ENCODE measurements at regions of chr5 and their contacts with region 1.

Region 1: DNA sequence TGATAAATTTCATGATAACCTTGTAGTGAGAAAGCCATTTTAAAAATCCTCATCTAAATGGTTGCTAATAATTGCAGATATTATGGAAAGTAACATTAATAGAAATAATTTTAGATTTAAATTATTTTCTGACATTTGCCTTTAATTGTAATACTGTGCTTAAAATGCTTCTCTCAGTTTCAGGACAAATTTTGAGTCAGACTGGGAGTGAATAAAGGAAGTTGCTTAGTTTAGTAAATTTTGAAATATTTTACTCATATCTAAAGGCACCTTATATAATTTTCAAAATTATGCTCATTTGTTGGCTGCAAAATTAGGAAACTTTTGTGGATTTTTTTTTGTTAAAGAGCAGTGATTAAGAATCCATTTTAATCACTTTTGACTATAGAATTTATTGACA is 93.8 kb downstream of the CSNK1G3 start:
- DNase-seq: no peak
- ATAC-seq: no peak
- H3K4me3 ChIP-seq: no peak overlapping the region
- H3K27ac ChIP-seq: no peak overlapping the region
- H3K4me1 ChIP-seq: peaks cover 0 to 12% (median 0%) of the 10 kb centered on the region in 9 donors
- H3K27me3 ChIP-seq: no peaks in the 10 kb centered on the region
- CTCF ChIP-seq: no peak

Region 2: GRCh38 chr5:123414975-123415374 is 190.8 kb before region 1 on chr5:
- intact Hi-C with region 1: loop called in 5 of 10 experiments (anchors 5 to 10 kb)
- DNase-seq: no peak
- ATAC-seq: no peak
- H3K4me3 ChIP-seq: no peak overlapping the region
- H3K27ac ChIP-seq: no peak overlapping the region
- H3K4me1 ChIP-seq: peaks cover 0 to 17% (median 0%) of the 10 kb centered on the region in 9 donors
- H3K27me3 ChIP-seq: no peaks in the 10 kb centered on the region
- CTCF ChIP-seq: no peak

Region 3: DNA sequence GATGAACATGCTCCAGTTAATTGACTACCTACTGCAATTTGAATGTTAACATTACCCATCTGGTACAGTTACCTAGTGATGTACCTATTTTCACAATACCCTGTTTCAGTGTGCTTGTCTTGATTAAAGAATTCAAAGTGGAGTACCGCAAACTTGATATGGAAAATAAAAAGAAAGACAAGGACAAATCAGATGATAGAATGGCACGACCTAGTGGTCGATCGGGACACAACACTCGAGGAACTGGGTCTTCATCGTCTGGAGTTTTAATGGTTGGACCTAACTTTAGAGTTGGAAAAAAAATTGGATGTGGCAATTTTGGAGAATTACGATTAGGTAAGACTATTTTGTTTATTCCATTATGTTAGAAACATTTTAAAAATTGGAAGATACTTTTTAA is 60.3 kb before region 1 on chr5:
- intact Hi-C with region 1: no loop called
- DNase-seq: no peak
- ATAC-seq: no peak
- H3K4me3 ChIP-seq: no peak overlapping the region
- H3K27ac ChIP-seq: no peak overlapping the region
- H3K4me1 ChIP-seq: peaks cover 0 to 12% (median 3%) of the 10 kb centered on the region in 9 donors
- H3K27me3 ChIP-seq: no peaks in the 10 kb centered on the region
- CTCF ChIP-seq: peak in 8 of 9 donors; percentile 19 to 69 (median 34)